Naive thymus-derived CD4-positive, alpha-beta T cell (primary cell): ENCODE measurements at regions of chr6 and their contacts with region 1.

Region 1: GRCh38 chr6:89080542-89081422 is at the start of gene PNRC1:
- DNase-seq: peak; percentile 99 to 100 (median 100)
- ATAC-seq: peak; percentile 86
- H3K4me3 ChIP-seq: peak within 1 kb of the TSS; percentile 96
- H3K4me3 Mint-ChIP-seq: peak within 1 kb of the TSS; percentile 91 to 99 (median 98)
- H3K27ac ChIP-seq: peak within 1 kb of the TSS; percentile 100
- H3K27ac Mint-ChIP-seq: peak within 1 kb of the TSS; percentile 92 to 99 (median 98)
- H3K4me1 ChIP-seq: peaks cover 27 to 33% of the 10 kb centered on the region in 2 donors
- H3K4me1 Mint-ChIP-seq: peaks cover 31 to 54% (median 42%) of the 10 kb centered on the region in 7 donors
- H3K27me3 ChIP-seq: no peaks in the 10 kb centered on the region
- H3K27me3 Mint-ChIP-seq: peaks cover 0 to 4% (median 0%) of the 10 kb centered on the region in 5 donors
- total RNA-seq, gene PNRC1: 108 to 822 (median 763) TPM

Region 2: GRCh38 chr6:87589693-87590549 is 1490.9 kb before region 1 on chr6 and contains the starts of genes ORC3 and RARS2:
- CTCF ChIA-PET with region 1: no interaction called
- POLR2A ChIA-PET with region 1: interaction called, 6 read pairs
- intact Hi-C with region 1: loop called in 1 of 2 experiments (anchors 2 kb)
- DNase-seq: peak; percentile 86 to 97 (median 92)
- ATAC-seq: peak; percentile 100
- H3K4me3 ChIP-seq: peak within 1 kb of the TSS; percentile 89
- H3K4me3 Mint-ChIP-seq: peak within 1 kb of the TSS; percentile 87 to 100 (median 96)
- H3K27ac ChIP-seq: peak within 1 kb of the TSS; percentile 92
- H3K27ac Mint-ChIP-seq: peak within 1 kb of the TSS; percentile 87 to 97 (median 95)
- H3K4me1 ChIP-seq: peaks cover 22 to 32% of the 10 kb centered on the region in 2 donors
- H3K4me1 Mint-ChIP-seq: peaks cover 49 to 81% (median 75%) of the 10 kb centered on the region in 7 donors
- H3K27me3 ChIP-seq: no peaks in the 10 kb centered on the region
- H3K27me3 Mint-ChIP-seq: no peaks in the 10 kb centered on the region
- total RNA-seq, gene ORC3: 17.7 to 29.8 (median 27.6) TPM
- total RNA-seq, gene RARS2: 21.0 to 40.0 (median 24.2) TPM

Region 3: GRCh38 chr6:89034586-89035251 is 46.1 kb before region 1 on chr6:
- CTCF ChIA-PET with region 1: no interaction called
- POLR2A ChIA-PET with region 1: interaction called, 4 read pairs
- intact Hi-C with region 1: loop called (anchors 1 to 5 kb)
- DNase-seq: no peak
- ATAC-seq: peak; percentile 88
- H3K4me3 ChIP-seq: no peak overlapping the region
- H3K4me3 Mint-ChIP-seq: no peak overlapping the region
- H3K27ac ChIP-seq: no peak overlapping the region
- H3K27ac Mint-ChIP-seq: no peak overlapping the region
- H3K4me1 ChIP-seq: no peaks in the 10 kb centered on the region
- H3K4me1 Mint-ChIP-seq: peaks cover 0 to 7% (median 3%) of the 10 kb centered on the region in 7 donors
- H3K27me3 ChIP-seq: no peaks in the 10 kb centered on the region
- H3K27me3 Mint-ChIP-seq: peaks cover 0 to 9% (median 0%) of the 10 kb centered on the region in 5 donors

Region 4: GRCh38 chr6:89145787-89146646 is 65.2 kb after region 1 on chr6 and contains the start of gene PM20D2:
- CTCF ChIA-PET with region 1: interaction called, 12 read pairs
- POLR2A ChIA-PET with region 1: interaction called, 115 read pairs
- intact Hi-C with region 1: loop called (anchors 1 kb)
- DNase-seq: peak; percentile 45 to 78 (median 59)
- ATAC-seq: peak; percentile 84
- H3K4me3 ChIP-seq: peak within 1 kb of the TSS; percentile 58
- H3K4me3 Mint-ChIP-seq: peak within 1 kb of the TSS; percentile 86 to 99 (median 94)
- H3K27ac ChIP-seq: peak within 1 kb of the TSS; percentile 73
- H3K27ac Mint-ChIP-seq: peak within 1 kb of the TSS; percentile 84 to 98 (median 95)
- H3K4me1 ChIP-seq: peaks cover 5 to 10% of the 10 kb centered on the region in 2 donors
- H3K4me1 Mint-ChIP-seq: peaks cover 16 to 39% (median 23%) of the 10 kb centered on the region in 7 donors
- H3K27me3 ChIP-seq: no peaks in the 10 kb centered on the region
- H3K27me3 Mint-ChIP-seq: peaks cover 0 to 14% (median 0%) of the 10 kb centered on the region in 5 donors
- total RNA-seq, gene PM20D2: 4.6 to 12.7 (median 9.5) TPM

Region 5: GRCh38 chr6:89371849-89372505 is 291.2 kb after region 1 on chr6:
- CTCF ChIA-PET with region 1: interaction called, 4 read pairs
- POLR2A ChIA-PET with region 1: interaction called, 19 read pairs
- intact Hi-C with region 1: loop called in 1 of 2 experiments (anchors 1 kb)
- DNase-seq: peak; percentile 55 to 79 (median 68)
- ATAC-seq: peak; percentile 85
- H3K4me3 ChIP-seq: no peak overlapping the region
- H3K4me3 Mint-ChIP-seq: peak overlapping the region in 3 of 10 donors; percentile 13 to 49 (median 29)
- H3K27ac ChIP-seq: no peak overlapping the region
- H3K27ac Mint-ChIP-seq: peak overlapping the region in 5 of 9 donors; percentile 39 to 87 (median 59)
- H3K4me1 ChIP-seq: peaks cover 6 to 8% of the 10 kb centered on the region in 2 donors
- H3K4me1 Mint-ChIP-seq: peaks cover 0 to 42% (median 9%) of the 10 kb centered on the region in 7 donors
- H3K27me3 ChIP-seq: no peaks in the 10 kb centered on the region
- H3K27me3 Mint-ChIP-seq: no peaks in the 10 kb centered on the region

Region 6: GRCh38 chr6:90296346-90297114 is 1215.7 kb after region 1 on chr6 and contains the start of gene BACH2:
- CTCF ChIA-PET with region 1: interaction called, 3 read pairs
- POLR2A ChIA-PET with region 1: no interaction called
- intact Hi-C with region 1: loop called (anchors 2 kb)
- DNase-seq: peak; percentile 84 to 97 (median 94)
- ATAC-seq: peak; percentile 85
- H3K4me3 ChIP-seq: peak within 1 kb of the TSS; percentile 59
- H3K4me3 Mint-ChIP-seq: peak within 1 kb of the TSS; percentile 79 to 97 (median 92)
- H3K27ac ChIP-seq: peak within 1 kb of the TSS; percentile 95
- H3K27ac Mint-ChIP-seq: peak within 1 kb of the TSS; percentile 89 to 100 (median 97)
- H3K4me1 ChIP-seq: peaks cover 7 to 26% of the 10 kb centered on the region in 2 donors
- H3K4me1 Mint-ChIP-seq: peaks cover 0 to 47% (median 38%) of the 10 kb centered on the region in 7 donors
- H3K27me3 ChIP-seq: no peaks in the 10 kb centered on the region
- H3K27me3 Mint-ChIP-seq: peaks cover 0 to 29% (median 0%) of the 10 kb centered on the region in 5 donors
- total RNA-seq, gene BACH2: 33.0 to 193 (median 133) TPM